ENCODE measurements at regions of chr10 and their contacts with region 1.

Region 1: DNA sequence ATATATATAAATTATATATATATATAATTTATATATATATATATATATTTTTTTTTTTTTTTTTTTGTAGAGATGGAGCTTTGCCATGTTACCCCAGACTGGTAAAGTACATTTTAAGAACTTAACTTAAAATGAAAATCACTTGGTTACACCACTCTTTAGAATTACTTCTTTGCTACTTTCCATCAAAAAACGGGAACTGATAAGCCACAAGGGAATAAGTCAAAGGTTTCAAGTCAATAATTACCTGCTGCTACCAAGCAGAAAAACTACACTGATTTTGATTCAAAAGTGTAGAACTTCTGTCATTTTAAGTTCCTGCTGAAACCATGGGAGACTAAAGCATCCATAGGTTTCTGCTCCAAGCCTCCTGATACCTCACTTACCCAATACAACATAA is 12.2 kb downstream of the PPA1 start:
- DNase-seq: no peak
- H3K4me3 ChIP-seq: no peak overlapping the region
- H3K27ac ChIP-seq: peak overlapping the region; percentile 69
- H3K4me1 ChIP-seq: peaks cover 10% of the 10 kb centered on the region
- H3K27me3 ChIP-seq: no peaks in the 10 kb centered on the region
- CTCF ChIP-seq: no peak
- POLR2A ChIP-seq: no peak

Region 2: DNA sequence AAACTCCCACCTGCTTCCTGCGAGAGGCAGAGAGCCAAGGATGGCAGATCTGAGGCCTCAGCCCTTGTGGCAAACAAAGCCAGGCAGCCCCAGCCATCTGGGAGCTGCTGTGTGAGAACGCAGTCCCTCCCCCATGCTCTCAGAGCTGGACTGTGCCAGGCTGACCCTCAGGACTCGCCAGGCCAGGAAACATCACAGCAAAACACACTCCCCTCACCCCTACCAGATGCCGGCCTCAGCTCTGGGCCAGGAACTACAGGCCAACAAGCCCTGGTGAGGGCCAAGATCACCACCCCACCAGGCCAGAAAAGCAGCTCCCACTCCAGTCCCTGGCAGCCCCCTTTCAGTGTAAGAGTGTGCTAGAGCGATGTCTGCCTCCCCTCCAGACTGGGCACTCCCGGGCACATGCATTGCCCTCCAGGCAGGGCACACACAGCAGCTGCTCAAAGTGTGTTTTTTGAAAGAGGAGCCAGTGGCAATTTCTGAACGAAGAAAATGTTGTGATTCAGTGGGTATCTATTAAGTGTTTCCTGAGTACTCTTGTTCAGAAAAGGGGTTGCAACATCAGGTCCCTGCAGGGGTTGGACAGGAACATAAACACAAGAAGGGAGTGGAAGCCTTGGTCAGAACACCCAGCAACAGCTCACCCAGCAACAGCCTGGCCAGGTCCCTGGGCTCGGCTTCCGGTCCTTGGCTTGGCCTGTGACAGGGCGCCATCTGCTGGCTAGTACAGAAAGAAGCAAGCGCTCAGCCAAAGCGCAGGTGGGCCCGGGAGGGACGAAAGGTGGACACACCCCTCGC is 143.1 kb after region 1 on chr10:
- intact Hi-C with region 1: loop called (anchors 2 kb)
- DNase-seq: peak in 1 of 2 donors; percentile 98
- H3K4me3 ChIP-seq: peak overlapping the region in 1 of 2 donors; percentile 39
- H3K27ac ChIP-seq: peak overlapping the region; percentile 89
- H3K4me1 ChIP-seq: peaks cover 23% of the 10 kb centered on the region
- H3K27me3 ChIP-seq: no peaks in the 10 kb centered on the region
- CTCF ChIP-seq: peak; percentile 91 to 97 (median 92)
- POLR2A ChIP-seq: no peak

Measured in vagina (tissue), 2 donors.